B cell (primary cell): ENCODE measurements at regions of chr6 and their contacts with region 1.

Region 1: DNA sequence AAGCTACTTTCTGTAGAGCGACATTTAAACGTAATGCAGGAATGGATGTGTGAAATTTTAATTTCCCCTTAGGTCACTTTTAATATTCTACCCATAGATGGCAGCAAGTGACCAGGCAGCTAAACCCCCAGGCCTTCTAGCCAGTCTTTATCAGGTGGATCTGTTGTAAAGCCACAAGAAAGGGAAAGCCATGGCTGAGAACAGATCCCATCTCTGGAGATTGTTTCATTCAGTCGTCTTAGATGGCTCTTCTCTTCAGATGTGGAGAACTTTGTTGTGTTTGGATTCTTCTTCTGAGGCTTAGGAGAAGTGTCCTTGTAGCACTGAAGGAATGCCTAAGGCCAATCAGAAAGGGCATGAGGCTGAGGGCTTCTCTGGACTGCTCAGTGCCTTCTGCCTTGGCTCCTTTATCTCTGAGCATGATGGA is 15.8 kb upstream of the RNF182 start:
- DNase-seq: peak; percentile 80
- ATAC-seq: peak; percentile 85
- H3K4me3 ChIP-seq: no peak overlapping the region
- H3K4me3 Mint-ChIP-seq: no peak overlapping the region
- H3K27ac ChIP-seq: no peak overlapping the region
- H3K27ac Mint-ChIP-seq: no peak overlapping the region
- H3K4me1 ChIP-seq: no peaks in the 10 kb centered on the region
- H3K4me1 Mint-ChIP-seq: peaks cover 1% of the 10 kb centered on the region
- H3K27me3 ChIP-seq: peaks cover 0 to 7% (median 3%) of the 10 kb centered on the region in 4 experiments
- H3K27me3 Mint-ChIP-seq: peaks cover 26% of the 10 kb centered on the region
- CTCF ChIP-seq: peak; percentile 98

Region 2: DNA sequence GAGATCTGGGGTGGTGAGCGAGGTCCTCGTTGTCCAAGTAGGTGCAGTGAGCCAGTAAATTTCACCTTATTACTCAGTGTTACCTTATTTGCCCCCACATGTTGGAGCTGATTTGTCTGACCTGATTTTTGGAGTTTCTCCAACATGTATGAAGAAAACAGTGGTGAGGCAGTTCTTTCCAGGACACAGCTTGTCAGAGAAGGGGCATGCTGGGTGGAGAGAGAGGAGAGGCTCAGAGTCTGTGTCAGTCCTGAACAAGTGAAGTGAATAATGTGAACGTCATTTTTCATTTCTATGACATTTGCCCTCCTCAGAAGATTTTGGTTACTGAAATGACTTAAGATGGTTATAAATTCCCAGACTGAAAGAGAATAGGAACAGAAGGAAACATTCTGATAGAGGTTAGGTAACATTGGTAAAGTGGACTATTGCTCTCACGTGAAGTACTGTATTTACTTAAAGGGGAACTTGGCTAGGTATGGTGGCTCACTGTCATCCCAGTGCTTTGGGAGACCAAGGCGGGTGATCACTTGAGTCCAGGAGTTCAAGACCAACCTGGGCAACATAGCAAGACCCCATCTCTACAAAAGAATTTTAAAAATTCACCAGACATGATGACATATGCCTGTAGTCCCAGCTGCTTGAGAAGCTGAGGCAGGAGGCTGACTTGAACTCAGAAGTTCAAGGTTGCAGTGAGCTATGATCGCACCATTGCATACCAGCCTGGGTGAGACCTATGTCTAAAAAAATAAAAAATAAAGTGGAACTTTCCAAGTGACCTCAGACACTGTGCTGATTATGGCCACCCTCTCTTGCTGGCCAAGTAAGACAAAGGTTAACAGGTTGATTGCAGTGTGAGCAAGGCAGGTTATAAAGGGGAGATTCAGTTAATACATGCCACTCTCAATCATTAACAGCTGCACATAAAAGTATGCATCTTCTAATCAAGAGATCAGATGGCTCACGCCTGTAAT is 1434.5 kb before region 1 on chr6:
- CTCF ChIA-PET with region 1: no interaction called
- POLR2A ChIA-PET with region 1: interaction called, 16 read pairs
- intact Hi-C with region 1: no loop called
- DNase-seq: no peak
- ATAC-seq: no peak
- H3K4me3 ChIP-seq: no peak overlapping the region
- H3K4me3 Mint-ChIP-seq: no peak overlapping the region
- H3K27ac ChIP-seq: no peak overlapping the region
- H3K27ac Mint-ChIP-seq: no peak overlapping the region
- H3K4me1 ChIP-seq: peaks cover 0 to 6% of the 10 kb centered on the region in 2 donors
- H3K4me1 Mint-ChIP-seq: no peaks in the 10 kb centered on the region
- H3K27me3 ChIP-seq: peaks cover 0 to 3% (median 0%) of the 10 kb centered on the region in 4 experiments
- H3K27me3 Mint-ChIP-seq: peaks cover 17% of the 10 kb centered on the region
- CTCF ChIP-seq: no peak

Region 3: GRCh38 chr6:14046476-14047068 is 137.6 kb after region 1 on chr6:
- CTCF ChIA-PET with region 1: interaction called, 15 read pairs
- POLR2A ChIA-PET with region 1: no interaction called
- intact Hi-C with region 1: loop called (anchors 5 kb)
- DNase-seq: peak; percentile 78
- ATAC-seq: peak; percentile 89
- H3K4me3 ChIP-seq: no peak overlapping the region
- H3K4me3 Mint-ChIP-seq: no peak overlapping the region
- H3K27ac ChIP-seq: no peak overlapping the region
- H3K27ac Mint-ChIP-seq: no peak overlapping the region
- H3K4me1 ChIP-seq: peaks cover 0 to 4% of the 10 kb centered on the region in 2 donors
- H3K4me1 Mint-ChIP-seq: peaks cover 4% of the 10 kb centered on the region
- H3K27me3 ChIP-seq: peaks cover 0 to 2% (median 0%) of the 10 kb centered on the region in 4 experiments
- H3K27me3 Mint-ChIP-seq: peaks cover 9% of the 10 kb centered on the region
- CTCF ChIP-seq: peak; percentile 81

Region 4: DNA sequence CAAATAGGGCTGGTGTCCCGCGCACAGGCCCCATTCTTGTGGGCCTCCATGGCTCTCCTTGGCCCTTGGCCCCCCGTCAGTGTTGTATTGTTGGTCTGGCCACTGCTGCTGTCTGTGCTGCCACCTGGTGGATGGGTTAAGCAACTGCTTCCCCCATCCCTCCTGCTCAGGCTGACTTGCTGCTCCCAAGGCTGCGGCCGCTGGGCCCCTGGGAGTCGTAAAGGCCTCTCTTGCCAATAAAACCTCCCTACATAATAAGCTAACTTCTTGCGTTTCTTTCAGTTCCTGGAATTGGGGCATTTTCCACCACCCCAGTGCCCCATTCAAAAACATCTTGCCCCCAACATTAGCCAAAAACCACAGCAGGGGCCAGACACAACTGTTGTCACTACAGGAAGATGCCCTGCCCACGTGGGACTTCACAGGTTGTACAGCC is 235.7 kb after region 1 on chr6:
- CTCF ChIA-PET with region 1: interaction called, 178 read pairs
- POLR2A ChIA-PET with region 1: no interaction called
- intact Hi-C with region 1: loop called (anchors 1 kb)
- DNase-seq: peak; percentile 85
- ATAC-seq: peak; percentile 83
- H3K4me3 ChIP-seq: no peak overlapping the region
- H3K4me3 Mint-ChIP-seq: no peak overlapping the region
- H3K27ac ChIP-seq: no peak overlapping the region
- H3K27ac Mint-ChIP-seq: peak overlapping the region; percentile 8
- H3K4me1 ChIP-seq: peaks cover 17 to 18% of the 10 kb centered on the region in 2 donors
- H3K4me1 Mint-ChIP-seq: peaks cover 59% of the 10 kb centered on the region
- H3K27me3 ChIP-seq: no peaks in the 10 kb centered on the region
- H3K27me3 Mint-ChIP-seq: no peaks in the 10 kb centered on the region
- CTCF ChIP-seq: peak; percentile 91

Region 5: DNA sequence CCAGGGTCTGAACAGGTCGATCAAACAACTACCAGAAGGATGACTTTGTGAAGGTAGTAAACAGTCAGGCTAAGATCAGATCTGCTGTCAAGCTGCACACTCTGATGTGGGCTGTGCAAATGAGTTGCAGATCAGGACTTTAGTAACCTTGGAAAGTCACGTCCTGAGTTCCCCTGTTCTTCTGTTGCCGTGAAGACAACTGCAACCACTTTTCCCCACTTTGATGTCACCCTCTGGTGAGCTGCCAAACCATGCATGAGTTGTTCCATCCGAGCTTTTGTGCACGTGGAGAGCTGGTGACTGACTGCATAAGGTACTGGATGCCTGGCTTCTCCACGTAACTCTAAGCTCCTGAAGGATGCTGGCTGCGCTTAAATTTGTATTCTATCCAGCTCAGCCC is 319.6 kb after region 1 on chr6:
- CTCF ChIA-PET with region 1: no interaction called
- POLR2A ChIA-PET with region 1: no interaction called
- intact Hi-C with region 1: no loop called
- DNase-seq: no peak
- ATAC-seq: no peak
- H3K4me3 ChIP-seq: no peak overlapping the region
- H3K4me3 Mint-ChIP-seq: no peak overlapping the region
- H3K27ac ChIP-seq: no peak overlapping the region
- H3K27ac Mint-ChIP-seq: no peak overlapping the region
- H3K4me1 ChIP-seq: peaks cover 39 to 47% of the 10 kb centered on the region in 2 donors
- H3K4me1 Mint-ChIP-seq: peaks cover 57% of the 10 kb centered on the region
- H3K27me3 ChIP-seq: no peaks in the 10 kb centered on the region
- H3K27me3 Mint-ChIP-seq: no peaks in the 10 kb centered on the region
- CTCF ChIP-seq: no peak

Region 6: DNA sequence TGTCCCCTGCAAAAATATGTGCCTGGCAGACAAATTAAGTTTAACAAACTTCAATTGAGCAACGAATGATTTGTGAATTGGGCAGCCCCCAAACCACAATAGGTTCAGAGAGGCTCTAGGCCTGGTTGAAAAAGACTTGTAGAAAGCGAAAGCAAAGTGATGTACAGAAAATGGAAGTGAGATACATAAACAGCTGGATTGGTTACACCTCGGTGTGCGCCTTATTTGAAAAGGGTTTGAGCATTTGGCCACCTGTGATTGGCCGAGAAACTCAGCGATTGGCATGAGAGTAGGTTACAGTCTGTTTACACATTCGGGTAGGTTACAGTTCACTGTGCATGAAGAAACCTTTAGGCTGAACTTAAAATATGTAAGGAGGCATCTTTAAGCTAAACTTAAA is 345.5 kb after region 1 on chr6:
- CTCF ChIA-PET with region 1: no interaction called
- POLR2A ChIA-PET with region 1: no interaction called
- intact Hi-C with region 1: no loop called
- DNase-seq: peak; percentile 76
- ATAC-seq: peak; percentile 85
- H3K4me3 ChIP-seq: peak overlapping the region in 1 of 5 experiments; percentile 0
- H3K4me3 Mint-ChIP-seq: peak overlapping the region; percentile 70
- H3K27ac ChIP-seq: peak overlapping the region; percentile 82 to 84
- H3K27ac Mint-ChIP-seq: peak overlapping the region; percentile 86
- H3K4me1 ChIP-seq: peaks cover 35 to 42% of the 10 kb centered on the region in 2 donors
- H3K4me1 Mint-ChIP-seq: peaks cover 49% of the 10 kb centered on the region
- H3K27me3 ChIP-seq: no peaks in the 10 kb centered on the region
- H3K27me3 Mint-ChIP-seq: no peaks in the 10 kb centered on the region
- CTCF ChIP-seq: no peak

Region 7: DNA sequence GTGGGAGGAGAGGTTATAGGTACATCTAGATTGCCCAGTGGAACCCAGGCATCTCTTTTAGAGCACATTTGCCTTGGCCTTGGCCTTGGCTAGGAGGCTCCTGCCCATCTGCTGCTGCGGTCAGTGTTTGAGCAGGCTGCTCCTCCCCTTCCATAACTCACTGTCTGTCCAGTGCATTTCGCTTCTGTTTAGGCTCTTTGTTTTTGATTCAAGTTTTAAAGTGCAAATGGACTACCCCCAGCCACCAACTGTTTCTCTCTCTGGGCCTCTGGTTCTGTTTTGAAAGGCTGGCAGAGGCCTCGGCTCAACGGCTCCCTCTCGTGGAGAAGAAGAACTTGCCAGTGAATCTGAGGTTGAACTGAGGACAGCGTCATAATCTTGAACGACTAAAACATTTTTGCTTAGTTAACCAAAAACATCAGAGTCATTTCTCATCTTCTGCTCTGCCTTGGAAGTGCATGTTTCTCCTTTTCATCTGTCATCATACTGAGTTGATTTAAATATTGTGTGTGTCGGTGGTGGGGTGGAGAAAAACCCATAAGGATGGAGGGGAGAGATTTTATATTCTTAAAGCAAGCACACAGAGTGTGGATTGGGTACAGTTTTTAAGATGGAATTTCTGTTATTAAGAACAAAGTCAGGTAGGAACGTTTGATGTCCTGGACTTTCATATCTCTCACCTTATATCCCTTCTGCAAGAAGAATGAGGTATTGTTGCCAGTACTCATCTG is 1582.5 kb after region 1 on chr6:
- CTCF ChIA-PET with region 1: interaction called, 16 read pairs
- POLR2A ChIA-PET with region 1: no interaction called
- intact Hi-C with region 1: loop called (anchors 1 kb)
- DNase-seq: peak; percentile 77
- ATAC-seq: peak; percentile 77
- H3K4me3 ChIP-seq: no peak overlapping the region
- H3K4me3 Mint-ChIP-seq: no peak overlapping the region
- H3K27ac ChIP-seq: no peak overlapping the region
- H3K27ac Mint-ChIP-seq: peak overlapping the region; percentile 51
- H3K4me1 ChIP-seq: peaks cover 15 to 18% of the 10 kb centered on the region in 2 donors
- H3K4me1 Mint-ChIP-seq: peaks cover 33% of the 10 kb centered on the region
- H3K27me3 ChIP-seq: no peaks in the 10 kb centered on the region
- H3K27me3 Mint-ChIP-seq: no peaks in the 10 kb centered on the region
- CTCF ChIP-seq: peak; percentile 93